ENCODE measurements at regions of chr12 and their contacts with region 1.

Region 1: DNA sequence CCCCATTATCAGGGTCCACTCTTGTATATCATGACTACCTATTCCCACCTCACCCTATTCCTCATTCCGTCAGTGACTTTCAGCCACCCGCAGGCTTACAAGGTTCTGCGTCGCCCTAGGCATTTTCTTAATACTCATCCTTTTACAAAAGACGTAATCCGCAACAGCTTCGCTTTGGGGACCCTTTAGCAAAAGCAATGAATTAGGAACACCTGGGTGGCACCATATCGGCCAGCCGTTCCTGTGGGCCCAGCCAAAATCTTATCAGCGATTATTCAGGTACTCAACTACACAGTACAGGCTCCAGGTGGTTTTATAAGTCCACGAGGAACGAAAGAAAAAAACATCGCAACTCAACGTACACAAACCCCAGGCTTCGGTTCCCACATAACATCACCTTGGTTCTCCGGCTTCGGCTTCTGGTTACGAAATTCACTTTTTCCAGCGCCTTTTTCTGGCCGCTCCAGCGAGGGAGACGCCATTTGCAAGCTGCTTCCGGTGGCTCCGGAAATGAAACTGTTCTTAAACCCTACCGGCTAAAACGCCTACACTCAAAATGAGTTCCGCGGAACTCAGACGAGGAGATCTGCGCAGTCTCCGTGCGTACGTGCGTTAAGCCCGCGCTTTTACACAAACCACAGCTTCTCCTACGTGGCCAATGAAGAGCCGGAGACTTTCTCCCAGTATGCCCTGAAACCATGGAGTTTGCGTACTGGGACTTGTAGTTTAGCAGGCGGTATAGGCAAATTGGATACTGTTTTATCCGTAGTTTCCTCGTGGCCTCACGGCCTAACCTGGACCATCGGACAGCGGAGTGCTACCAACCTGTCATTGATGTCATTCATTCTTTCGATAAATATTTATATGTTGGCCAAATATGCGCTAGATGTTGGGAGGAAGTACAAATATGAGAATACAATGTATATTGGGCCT is at the start of gene KRR1:
- DNase-seq: peak; percentile 84 to 95
- ATAC-seq: peak; percentile 99 to 100 (median 100)
- H3K4me3 ChIP-seq: peak within 1 kb of the TSS; percentile 72 to 98 (median 78)
- H3K27ac ChIP-seq: peak within 1 kb of the TSS in 9 of 10 donors; percentile 46 to 85 (median 73)
- H3K4me1 ChIP-seq: peaks cover 0 to 32% (median 28%) of the 10 kb centered on the region in 9 donors
- H3K27me3 ChIP-seq: no peaks in the 10 kb centered on the region
- CTCF ChIP-seq: peak in 1 of 9 donors; percentile 23
- total RNA-seq, gene KRR1: 29.2 to 44.2 (median 33.1) TPM

Region 2: GRCh38 chr12:75390899-75391538 is 120.4 kb before region 1 on chr12 and contains the start of gene GLIPR1L2:
- intact Hi-C with region 1: loop called in 3 of 10 experiments (anchors 2 to 10 kb)
- DNase-seq: peak; percentile 95 to 96
- ATAC-seq: peak; percentile 99 to 100 (median 100)
- H3K4me3 ChIP-seq: peak within 1 kb of the TSS; percentile 25 to 70 (median 60)
- H3K27ac ChIP-seq: peak within 1 kb of the TSS; percentile 66 to 96 (median 89)
- H3K4me1 ChIP-seq: peaks cover 0 to 33% (median 24%) of the 10 kb centered on the region in 9 donors
- H3K27me3 ChIP-seq: no peaks in the 10 kb centered on the region
- CTCF ChIP-seq: peak; percentile 75 to 93 (median 82)
- total RNA-seq, gene GLIPR1L2: 0.66 to 2.9 (median 1.5) TPM

Region 3: DNA sequence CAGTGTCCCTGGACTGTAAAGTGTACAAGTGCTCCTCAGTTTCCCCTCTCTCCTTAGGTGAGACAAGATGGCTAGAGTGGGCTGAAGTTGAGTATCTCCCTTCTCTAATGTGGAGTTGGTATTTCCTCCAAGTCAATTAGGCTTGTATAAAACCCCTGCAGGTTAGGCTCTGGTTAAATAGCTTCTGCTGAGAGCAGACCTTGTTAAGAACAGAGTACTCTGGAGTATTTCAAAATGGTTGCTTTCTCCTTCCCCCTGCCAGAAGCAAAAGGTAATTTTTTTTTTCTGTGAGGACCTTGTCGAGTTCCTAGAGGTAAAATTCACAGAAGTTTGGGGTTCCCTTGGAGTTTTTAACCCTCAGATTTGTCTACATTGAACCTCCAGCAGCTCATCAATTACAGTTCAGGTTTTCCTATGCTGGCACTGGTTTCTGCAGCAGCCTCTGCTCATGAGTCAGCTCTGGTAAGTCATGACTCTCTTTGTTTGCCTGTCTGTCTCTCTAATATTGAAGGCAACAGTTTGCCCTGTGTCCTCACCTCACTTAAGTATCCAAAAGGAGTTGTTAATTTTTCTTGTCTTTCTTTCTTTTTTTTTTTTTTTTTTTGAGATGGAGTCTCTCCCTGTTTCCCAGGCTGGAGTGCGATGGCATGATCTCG is 58.6 kb before region 1 on chr12:
- intact Hi-C with region 1: no loop called
- DNase-seq: no peak
- ATAC-seq: no peak
- H3K4me3 ChIP-seq: no peak overlapping the region
- H3K27ac ChIP-seq: no peak overlapping the region
- H3K4me1 ChIP-seq: peaks cover 0 to 15% (median 0%) of the 10 kb centered on the region in 9 donors
- H3K27me3 ChIP-seq: no peaks in the 10 kb centered on the region
- CTCF ChIP-seq: no peak

Region 4: DNA sequence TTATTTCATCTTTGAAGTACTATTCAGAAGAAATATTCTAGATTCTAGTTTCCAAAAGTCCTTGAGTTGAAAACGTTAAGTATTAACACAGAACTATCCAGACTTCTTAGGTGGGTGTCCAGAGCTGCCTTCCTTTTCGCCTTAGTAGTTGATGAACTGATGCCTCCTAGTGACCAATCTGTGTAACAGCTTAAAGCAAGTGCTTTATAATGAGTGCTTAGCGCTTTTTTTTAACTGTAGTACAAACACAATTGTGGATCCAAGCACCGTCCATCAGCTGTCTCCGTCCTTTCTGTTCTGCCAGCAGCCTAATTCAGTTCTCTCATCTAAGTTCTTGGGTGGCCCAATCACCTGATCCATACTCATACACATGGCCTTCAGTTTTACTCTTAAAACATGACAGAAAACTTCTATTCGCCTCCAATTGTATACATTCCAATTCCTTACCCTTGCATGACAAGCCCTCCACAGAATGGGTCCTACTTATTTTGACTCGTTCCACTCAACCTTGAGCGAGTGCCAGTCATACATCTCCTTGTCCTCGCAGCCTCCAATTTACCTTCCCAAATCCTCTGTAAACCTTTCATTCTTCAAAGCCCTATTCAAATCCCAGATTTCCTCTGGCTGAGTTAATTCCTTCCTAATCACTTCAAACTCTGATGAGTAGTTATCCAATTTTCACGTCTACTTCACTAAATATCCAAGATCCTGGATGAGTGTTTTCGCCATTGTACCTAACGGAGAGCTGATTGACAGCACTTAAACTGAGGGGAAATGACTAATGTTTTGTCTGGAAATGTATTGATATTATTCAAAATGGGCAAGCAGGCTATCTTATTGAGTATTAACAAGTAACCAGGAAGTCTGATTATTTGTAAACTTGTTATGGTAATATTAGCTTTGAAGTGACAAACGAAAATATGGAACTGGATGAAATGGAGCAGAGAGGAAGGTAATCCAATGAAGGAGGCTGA is 526.0 kb after region 1 on chr12:
- intact Hi-C with region 1: loop called in 3 of 10 experiments (anchors 1 to 5 kb)
- DNase-seq: peak in 1 of 2 donors; percentile 54
- ATAC-seq: peak; percentile 46 to 78 (median 72)
- H3K4me3 ChIP-seq: no peak overlapping the region
- H3K27ac ChIP-seq: no peak overlapping the region
- H3K4me1 ChIP-seq: peaks cover 0 to 33% (median 14%) of the 10 kb centered on the region in 9 donors
- H3K27me3 ChIP-seq: peaks cover 0 to 6% (median 0%) of the 10 kb centered on the region in 7 donors
- CTCF ChIP-seq: peak; percentile 63 to 92 (median 82)

Region 5: DNA sequence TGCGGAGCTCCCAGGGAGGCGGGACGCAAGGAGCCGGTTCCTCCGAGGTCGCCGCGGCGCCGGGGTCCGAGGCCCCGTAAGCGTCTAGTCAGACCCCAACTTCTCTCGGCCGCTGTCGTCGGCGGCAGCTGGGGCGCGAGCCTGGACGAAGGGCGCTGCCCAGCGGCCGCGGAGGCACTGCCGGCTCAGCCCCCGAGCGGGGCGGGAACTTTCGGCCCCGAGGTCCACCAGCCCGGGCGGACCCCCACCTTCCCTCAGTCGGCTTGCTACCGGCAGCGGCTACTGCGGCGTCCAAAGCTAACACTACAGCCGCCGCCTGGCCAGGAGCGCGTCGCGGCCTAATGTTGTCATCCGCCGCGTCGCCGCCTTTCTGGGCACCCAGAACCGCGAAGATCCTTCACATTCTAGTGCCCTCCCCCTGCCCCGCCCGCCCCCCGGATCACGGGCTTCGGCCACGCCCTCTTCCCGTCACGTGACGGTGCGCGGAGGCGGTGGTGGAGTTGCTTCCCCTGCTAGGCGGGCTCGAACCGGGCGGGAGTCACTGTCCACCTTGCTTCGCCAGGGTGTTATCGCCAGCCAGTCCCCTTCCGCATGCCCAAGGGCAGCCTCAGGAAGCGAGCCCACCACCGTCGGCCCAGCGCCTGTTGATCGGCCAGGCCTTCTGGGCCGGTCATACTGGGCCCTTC is 1048.2 kb after region 1 on chr12 and contains the start of gene OSBPL8:
- intact Hi-C with region 1: loop called in 1 of 10 experiments (anchors 10 kb)
- DNase-seq: peak; percentile 96 to 97
- ATAC-seq: peak; percentile 97 to 99 (median 98)
- H3K4me3 ChIP-seq: peak within 1 kb of the TSS; percentile 84 to 97 (median 94)
- H3K27ac ChIP-seq: peak within 1 kb of the TSS; percentile 67 to 99 (median 94)
- H3K4me1 ChIP-seq: peaks cover 0 to 49% (median 32%) of the 10 kb centered on the region in 9 donors
- H3K27me3 ChIP-seq: no peaks in the 10 kb centered on the region
- CTCF ChIP-seq: peak in 5 of 9 donors; percentile 32 to 68 (median 62)
- total RNA-seq, gene OSBPL8: 25.5 to 50.0 (median 37.0) TPM

Measured in heart right ventricle (tissue), 16 donors.